MCF 10A (cell line): ENCODE measurements at regions of chr7 and their contacts with region 1.

Region 1: GRCh38 chr7:13990984-13991790 is 1.7 kb upstream of the ETV1 start:
- DNase-seq: peak; percentile 96
- H3K4me3 Mint-ChIP-seq: no peak overlapping the region
- H3K27ac Mint-ChIP-seq: no peak overlapping the region
- H3K4me1 Mint-ChIP-seq: no peaks in the 10 kb centered on the region
- H3K27me3 Mint-ChIP-seq: no peaks in the 10 kb centered on the region
- CTCF ChIP-seq: no peak

Region 2: DNA sequence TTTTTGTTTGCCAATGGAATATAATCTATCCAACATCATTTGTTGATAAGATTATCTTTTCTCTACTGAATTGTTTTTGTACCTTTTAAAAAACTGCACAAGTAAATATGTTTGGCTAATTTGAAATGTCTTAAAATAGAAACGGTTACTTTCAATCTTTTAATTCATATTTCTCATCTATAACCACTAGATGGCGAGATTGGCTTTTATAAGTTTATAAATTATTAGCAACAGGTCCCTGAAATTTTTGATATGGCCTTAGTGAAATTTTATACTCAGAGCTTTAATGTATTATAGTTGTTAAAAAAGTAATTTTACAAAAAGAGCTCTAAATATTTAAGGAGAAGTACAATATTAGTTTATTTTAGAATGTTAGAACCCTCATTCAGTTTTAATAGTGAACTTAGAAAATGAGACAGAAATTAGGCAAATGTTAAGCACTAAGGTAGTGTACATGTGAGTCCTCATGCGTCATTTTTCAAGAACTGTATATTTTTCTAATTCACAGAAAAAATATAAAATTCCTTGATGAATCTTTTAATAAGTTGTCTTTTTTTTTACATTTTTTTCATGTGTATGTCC is 711.2 kb before region 1 on chr7:
- CTCF ChIA-PET with region 1: interaction called, 6 read pairs
- POLR2A ChIA-PET with region 1: no interaction called
- intact Hi-C with region 1: loop called (anchors 5 kb)
- DNase-seq: peak; percentile 44
- H3K4me3 Mint-ChIP-seq: no peak overlapping the region
- H3K27ac Mint-ChIP-seq: no peak overlapping the region
- H3K4me1 Mint-ChIP-seq: no peaks in the 10 kb centered on the region
- H3K27me3 Mint-ChIP-seq: peaks cover 2% of the 10 kb centered on the region
- CTCF ChIP-seq: peak; percentile 33

Region 3: DNA sequence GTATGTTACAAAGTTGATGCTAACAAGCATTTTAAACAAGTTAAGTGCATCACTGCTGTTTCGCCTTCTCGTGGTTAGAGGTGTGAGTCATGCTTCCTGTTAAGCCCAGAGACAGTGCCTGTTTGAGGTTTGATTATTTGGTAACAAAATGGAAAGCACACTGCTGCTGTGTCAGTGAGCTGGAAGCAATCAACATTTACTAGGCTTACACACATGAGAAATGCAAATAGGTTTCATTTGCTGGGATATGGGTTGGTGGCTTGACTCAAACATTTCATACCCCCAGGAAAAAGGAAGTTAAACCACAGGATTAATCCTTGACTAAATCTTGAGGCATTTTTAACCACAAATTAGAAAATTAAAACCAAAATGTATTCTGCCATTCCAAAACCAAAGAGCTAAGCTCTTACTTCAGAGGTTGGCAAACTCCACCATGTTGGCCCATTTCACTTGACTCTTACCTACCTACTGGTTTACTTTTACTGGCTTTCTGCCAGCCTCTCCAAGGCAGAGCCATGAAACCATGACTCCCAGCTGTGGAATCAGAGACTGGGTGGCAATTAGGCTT is 140.9 kb before region 1 on chr7:
- CTCF ChIA-PET with region 1: no interaction called
- POLR2A ChIA-PET with region 1: interaction called, 4 read pairs
- intact Hi-C with region 1: loop called (anchors 2 kb)
- DNase-seq: peak; percentile 94
- H3K4me3 Mint-ChIP-seq: peak overlapping the region; percentile 22
- H3K27ac Mint-ChIP-seq: peak overlapping the region; percentile 69
- H3K4me1 Mint-ChIP-seq: peaks cover 29% of the 10 kb centered on the region
- H3K27me3 Mint-ChIP-seq: no peaks in the 10 kb centered on the region
- CTCF ChIP-seq: no peak

Region 4: DNA sequence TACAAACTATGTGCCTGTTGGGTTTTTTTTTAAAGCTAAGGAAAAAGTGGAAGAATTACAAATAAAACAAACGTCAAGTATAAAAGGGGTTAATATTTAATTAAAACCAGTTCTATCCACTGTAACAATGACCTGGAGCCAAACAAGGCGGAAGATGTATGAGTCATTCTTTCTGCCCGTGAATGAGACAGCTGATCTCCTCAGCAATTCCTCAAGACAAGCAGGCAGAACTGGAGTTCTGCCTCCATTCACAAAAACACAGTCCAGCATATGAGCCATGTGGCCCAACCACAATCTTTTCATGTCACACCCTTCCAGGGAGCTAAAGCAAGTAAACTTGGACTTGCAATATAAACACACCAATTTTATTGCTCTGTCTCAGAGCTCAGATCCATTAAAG is 10.1 kb before region 1 on chr7:
- CTCF ChIA-PET with region 1: interaction called, 29 read pairs
- POLR2A ChIA-PET with region 1: interaction called, 30 read pairs
- intact Hi-C with region 1: no loop called
- DNase-seq: peak; percentile 90
- H3K4me3 Mint-ChIP-seq: no peak overlapping the region
- H3K27ac Mint-ChIP-seq: peak overlapping the region; percentile 25
- H3K4me1 Mint-ChIP-seq: peaks cover 33% of the 10 kb centered on the region
- H3K27me3 Mint-ChIP-seq: no peaks in the 10 kb centered on the region
- CTCF ChIP-seq: no peak

Region 5: GRCh38 chr7:14691597-14692203 is 700.5 kb after region 1 on chr7:
- CTCF ChIA-PET with region 1: interaction called, 3 read pairs
- POLR2A ChIA-PET with region 1: no interaction called
- intact Hi-C with region 1: loop called (anchors 5 kb)
- DNase-seq: peak; percentile 42
- H3K4me3 Mint-ChIP-seq: no peak overlapping the region
- H3K27ac Mint-ChIP-seq: no peak overlapping the region
- H3K4me1 Mint-ChIP-seq: no peaks in the 10 kb centered on the region
- H3K27me3 Mint-ChIP-seq: peaks cover 33% of the 10 kb centered on the region
- CTCF ChIP-seq: peak; percentile 88